Posterior vena cava (tissue), 2 donors: ENCODE measurements at regions of chr1 and their contacts with region 1.

Region 1: DNA sequence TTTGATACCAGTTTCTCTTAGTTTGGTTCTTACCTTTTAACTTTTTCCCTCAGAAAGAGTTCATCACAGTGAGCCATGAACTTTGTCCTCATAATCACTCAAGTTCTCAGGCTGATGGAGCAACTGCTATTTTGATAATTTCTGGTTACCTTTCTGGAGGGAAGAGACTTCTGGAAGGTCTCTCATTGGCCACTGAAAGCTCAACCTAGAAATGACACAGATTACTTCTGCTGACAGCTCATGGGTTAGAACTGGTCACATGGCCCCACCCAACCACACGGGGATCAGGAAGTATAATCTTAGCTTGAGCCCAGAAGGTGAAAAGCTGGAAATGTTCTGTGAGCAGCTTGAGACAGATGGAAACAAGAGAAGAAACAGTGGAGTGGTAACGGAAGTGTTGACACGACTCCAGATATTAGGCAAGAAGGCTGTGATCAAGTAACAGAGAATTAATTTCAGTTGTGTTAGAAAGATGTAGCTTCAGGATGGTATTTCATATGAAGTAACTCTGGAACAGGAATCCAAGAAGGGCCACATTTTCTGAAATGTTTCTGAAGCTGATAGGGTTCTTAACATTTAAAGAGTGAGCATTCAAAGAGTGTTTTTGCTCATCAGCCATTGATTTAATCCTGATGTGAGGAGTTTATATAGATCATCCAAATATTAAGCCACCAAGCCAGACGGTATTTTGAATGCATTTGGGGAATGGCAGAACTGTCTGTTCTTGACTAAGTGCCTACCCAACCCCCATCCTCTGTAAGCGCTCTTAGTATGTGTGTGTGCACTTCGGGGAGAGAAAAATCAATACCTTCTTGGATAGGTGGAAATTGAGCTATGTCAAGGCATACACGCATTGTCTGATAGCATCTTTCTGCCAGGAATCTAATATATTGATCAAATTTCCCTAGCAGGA is 21.9 kb upstream of the XPR1 start:
- DNase-seq: no peak

Region 2: GRCh38 chr1:180552626-180553025 is 57.3 kb before region 1 on chr1:
- intact Hi-C with region 1: loop called in 1 of 2 experiments (anchors 10 kb)
- DNase-seq: no peak